ENCODE measurements at regions of chr1 and their contacts with region 1.

Region 1: GRCh38 chr1:117128323-117129079 is 7.0 kb upstream of the TRIM45 start:
- DNase-seq: no peak
- H3K4me3 Mint-ChIP-seq: no peak overlapping the region
- H3K27ac Mint-ChIP-seq: no peak overlapping the region
- H3K4me1 Mint-ChIP-seq: no peaks in the 10 kb centered on the region
- H3K27me3 Mint-ChIP-seq: peaks cover 10% of the 10 kb centered on the region

Region 2: DNA sequence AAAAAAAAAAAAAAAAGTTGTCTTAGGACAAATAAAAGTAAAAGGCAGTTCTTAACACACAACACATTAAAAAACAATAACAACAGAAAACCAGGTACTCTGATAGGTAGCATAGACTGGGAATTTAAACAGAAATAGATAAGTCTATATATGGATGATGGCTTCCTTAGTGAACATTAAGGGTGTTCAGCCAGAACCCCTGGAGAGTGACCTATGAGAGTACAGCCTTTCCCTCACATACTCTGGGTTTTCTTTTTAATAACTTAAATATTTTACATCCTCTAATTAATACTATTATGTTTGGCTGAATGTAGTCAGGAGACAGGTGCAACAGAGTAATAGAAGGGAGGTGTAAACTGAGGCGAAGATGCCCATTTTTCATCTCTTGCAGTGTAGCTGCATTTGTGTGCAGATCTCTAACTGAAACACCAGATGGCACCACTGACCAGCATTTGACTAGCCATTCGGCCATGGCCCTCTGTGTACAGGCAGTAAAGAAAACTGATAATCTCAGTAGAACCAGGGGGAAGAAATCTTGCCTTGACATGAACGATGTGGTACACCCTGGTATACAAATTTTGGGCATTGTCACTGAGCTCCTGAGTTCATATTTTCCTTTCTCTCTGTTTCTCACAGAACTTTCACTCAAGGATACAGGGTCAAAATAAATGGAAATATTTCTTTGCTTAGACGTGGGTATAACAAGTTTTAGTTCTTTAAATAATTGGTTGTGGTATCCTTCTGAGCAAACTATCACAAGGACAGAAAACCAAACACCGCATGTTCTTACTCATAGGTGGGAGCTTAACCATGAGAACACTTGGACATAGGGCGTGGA is 60.7 kb before region 1 on chr1:
- CTCF ChIA-PET with region 1: interaction called, 150 read pairs
- POLR2A ChIA-PET with region 1: no interaction called
- intact Hi-C with region 1: loop called (anchors 1 kb)
- DNase-seq: peak; percentile 60
- H3K4me3 Mint-ChIP-seq: no peak overlapping the region
- H3K27ac Mint-ChIP-seq: no peak overlapping the region
- H3K4me1 Mint-ChIP-seq: peaks cover 38% of the 10 kb centered on the region
- H3K27me3 Mint-ChIP-seq: no peaks in the 10 kb centered on the region

Region 3: DNA sequence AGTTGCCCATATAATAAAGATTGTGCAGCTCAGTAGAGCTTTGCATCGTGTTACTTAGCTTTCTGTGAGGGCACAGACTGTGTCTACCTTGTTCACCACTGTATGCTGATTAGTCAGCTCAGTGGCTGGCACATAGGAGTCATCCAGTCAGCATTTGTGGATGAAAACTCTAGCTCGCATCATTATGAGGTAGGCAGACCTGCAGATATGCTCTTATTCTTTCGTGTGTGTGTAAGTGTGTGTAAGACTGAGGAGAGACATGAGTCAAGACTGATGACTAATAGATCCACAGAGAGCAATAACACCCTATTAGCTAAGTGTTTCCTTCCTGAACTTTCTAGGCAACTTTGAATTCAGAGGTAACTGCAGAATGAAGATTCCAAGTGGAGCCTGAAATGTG is 51.2 kb before region 1 on chr1:
- CTCF ChIA-PET with region 1: interaction called, 11 read pairs
- POLR2A ChIA-PET with region 1: no interaction called
- intact Hi-C with region 1: loop called (anchors 2 kb)
- DNase-seq: peak; percentile 79
- H3K4me3 Mint-ChIP-seq: no peak overlapping the region
- H3K27ac Mint-ChIP-seq: peak overlapping the region; percentile 71
- H3K4me1 Mint-ChIP-seq: peaks cover 30% of the 10 kb centered on the region
- H3K27me3 Mint-ChIP-seq: no peaks in the 10 kb centered on the region

Region 4: DNA sequence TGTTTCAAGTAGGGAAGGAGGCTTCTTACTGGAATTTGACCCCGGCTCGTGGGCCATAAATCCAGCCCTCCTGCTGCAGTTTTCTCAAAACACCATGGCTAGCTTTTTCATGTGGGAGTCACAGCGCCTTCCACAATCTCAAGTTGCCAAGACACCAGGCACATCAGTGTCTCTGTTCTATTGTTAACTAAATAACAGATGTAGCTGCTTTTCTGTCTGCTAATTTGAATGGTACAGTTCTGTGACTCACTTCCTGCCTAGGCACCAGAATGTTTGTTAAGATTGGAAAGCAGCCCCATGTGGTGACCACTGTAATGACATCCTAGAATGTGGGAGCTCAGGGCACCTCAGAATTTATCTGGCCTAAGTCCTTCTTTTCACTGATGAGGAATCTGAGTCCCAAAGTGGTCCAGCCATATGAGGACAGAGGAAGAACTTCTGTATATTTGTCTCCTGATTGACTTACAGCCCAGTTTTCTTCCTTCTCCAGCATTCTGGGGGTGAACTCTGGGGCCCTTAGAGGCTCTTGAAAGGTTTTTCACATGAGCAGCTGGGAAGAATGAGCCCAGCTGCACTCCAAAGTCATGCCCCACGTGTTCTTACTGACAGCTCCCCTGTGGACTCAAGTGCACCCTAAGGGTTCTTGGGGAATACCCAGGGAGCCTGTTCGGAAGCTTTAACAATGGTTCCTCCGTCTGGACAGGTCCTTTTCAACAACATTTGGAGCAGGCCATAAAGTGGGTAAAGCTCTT is 34.5 kb before region 1 on chr1:
- CTCF ChIA-PET with region 1: interaction called, 30 read pairs
- POLR2A ChIA-PET with region 1: no interaction called
- intact Hi-C with region 1: no loop called
- DNase-seq: peak; percentile 57
- H3K4me3 Mint-ChIP-seq: no peak overlapping the region
- H3K27ac Mint-ChIP-seq: no peak overlapping the region
- H3K4me1 Mint-ChIP-seq: peaks cover 16% of the 10 kb centered on the region
- H3K27me3 Mint-ChIP-seq: no peaks in the 10 kb centered on the region

Region 5: GRCh38 chr1:117114877-117115276 is 13.6 kb before region 1 on chr1:
- CTCF ChIA-PET with region 1: interaction called, 21 read pairs
- POLR2A ChIA-PET with region 1: no interaction called
- intact Hi-C with region 1: no loop called
- DNase-seq: no peak
- H3K4me3 Mint-ChIP-seq: no peak overlapping the region
- H3K27ac Mint-ChIP-seq: no peak overlapping the region
- H3K4me1 Mint-ChIP-seq: peaks cover 9% of the 10 kb centered on the region
- H3K27me3 Mint-ChIP-seq: no peaks in the 10 kb centered on the region

Region 6: DNA sequence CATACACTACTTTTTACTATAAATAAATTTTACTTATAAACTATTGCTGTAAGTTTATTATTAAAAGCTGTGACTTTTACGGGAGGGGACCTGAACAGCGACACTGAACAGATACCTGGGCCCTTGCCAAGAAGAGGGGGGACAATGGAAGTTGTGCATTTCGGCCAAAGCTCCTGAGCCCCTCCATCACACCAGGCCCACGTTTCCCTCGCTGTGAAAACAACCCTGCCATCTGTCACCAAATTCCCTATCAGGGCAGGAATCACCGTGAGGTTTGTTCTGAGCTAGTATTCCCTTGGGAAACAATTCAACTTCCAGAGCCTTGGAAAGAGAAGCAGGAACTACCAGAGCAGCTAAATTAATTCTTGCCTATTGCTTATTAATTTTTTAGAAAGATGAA is 45.2 kb after region 1 on chr1:
- CTCF ChIA-PET with region 1: no interaction called
- POLR2A ChIA-PET with region 1: no interaction called
- intact Hi-C with region 1: no loop called
- DNase-seq: no peak
- H3K4me3 Mint-ChIP-seq: no peak overlapping the region
- H3K27ac Mint-ChIP-seq: no peak overlapping the region
- H3K4me1 Mint-ChIP-seq: no peaks in the 10 kb centered on the region
- H3K27me3 Mint-ChIP-seq: no peaks in the 10 kb centered on the region